Activated CD8-positive, alpha-beta memory T cell treated with anti-CD3 and anti-CD28 coated beads, Interleukin-2, amount 10 ng/mL, durations not matched to agents 7 days and 5 days (primary cell): ENCODE measurements at regions of chr1 and their contacts with region 1.

Region 1: GRCh38 chr1:9651565-9652378 is at the start of gene PIK3CD:
- DNase-seq: peak; percentile 66
- ATAC-seq: peak; percentile 59
- H3K4me3 Mint-ChIP-seq: peak within 1 kb of the TSS; percentile 97
- H3K27ac Mint-ChIP-seq: peak within 1 kb of the TSS; percentile 97
- H3K4me1 Mint-ChIP-seq: peaks cover 46% of the 10 kb centered on the region
- H3K27me3 Mint-ChIP-seq: no peaks in the 10 kb centered on the region
- total RNA-seq, gene PIK3CD: 256 to 261 TPM

Region 2: GRCh38 chr1:9665193-9665592 is 13.4 kb after region 1 on chr1:
- CTCF ChIA-PET with region 1: interaction called, 31 read pairs
- DNase-seq: no peak
- ATAC-seq: no peak
- H3K4me3 Mint-ChIP-seq: no peak overlapping the region
- H3K27ac Mint-ChIP-seq: no peak overlapping the region
- H3K4me1 Mint-ChIP-seq: peaks cover 45% of the 10 kb centered on the region
- H3K27me3 Mint-ChIP-seq: no peaks in the 10 kb centered on the region

Region 3: DNA sequence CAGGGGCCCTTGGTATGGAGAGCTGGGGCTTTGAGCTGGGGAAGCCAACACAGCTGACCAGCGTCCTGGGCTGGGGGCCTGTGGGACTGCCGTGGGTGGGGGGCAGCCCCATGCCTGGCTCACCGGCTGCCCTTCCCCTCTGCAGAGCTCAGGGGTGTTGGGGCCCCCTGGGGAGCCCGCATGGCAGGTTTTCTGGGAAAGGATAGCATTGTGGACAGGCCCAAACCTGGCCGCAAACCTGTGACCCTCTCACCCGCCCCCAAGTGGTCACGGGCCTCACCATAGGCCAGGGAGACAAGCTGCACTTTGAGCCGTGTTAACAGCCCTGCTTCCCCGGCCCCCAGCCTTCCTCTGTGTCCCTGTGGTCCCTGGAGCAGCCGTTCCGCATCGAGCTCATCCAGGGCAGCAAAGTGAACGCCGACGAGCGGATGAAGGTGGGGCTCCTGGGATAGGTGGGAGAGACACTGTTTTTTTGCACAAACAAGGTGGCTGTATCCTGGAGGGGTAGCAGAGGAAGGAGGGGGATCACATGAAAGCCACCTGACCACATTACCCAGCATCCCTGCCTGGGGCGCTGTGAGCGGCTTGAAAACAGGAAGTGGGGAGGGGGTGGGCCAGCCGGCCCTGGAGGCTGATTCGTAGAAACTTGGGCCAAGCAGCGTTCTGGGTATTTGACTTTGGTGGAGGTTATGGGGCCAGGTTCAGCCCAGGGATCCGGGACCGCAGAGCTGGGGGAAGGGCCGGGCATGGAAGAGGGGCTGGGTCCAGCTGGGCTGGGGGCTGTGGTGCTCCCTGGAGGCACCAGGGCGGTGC is 65.6 kb after region 1 on chr1:
- CTCF ChIA-PET with region 1: interaction called, 20 read pairs
- DNase-seq: peak; percentile 98
- ATAC-seq: peak; percentile 70
- H3K4me3 Mint-ChIP-seq: peak overlapping the region; percentile 87
- H3K27ac Mint-ChIP-seq: peak overlapping the region; percentile 96
- H3K4me1 Mint-ChIP-seq: peaks cover 78% of the 10 kb centered on the region
- H3K27me3 Mint-ChIP-seq: peaks cover 2% of the 10 kb centered on the region

Region 4: GRCh38 chr1:9724706-9725476 is 73.1 kb after region 1 on chr1:
- CTCF ChIA-PET with region 1: interaction called, 13 read pairs
- DNase-seq: peak; percentile 79
- ATAC-seq: peak; percentile 62
- H3K4me3 Mint-ChIP-seq: no peak overlapping the region
- H3K27ac Mint-ChIP-seq: peak overlapping the region; percentile 72
- H3K4me1 Mint-ChIP-seq: peaks cover 70% of the 10 kb centered on the region
- H3K27me3 Mint-ChIP-seq: no peaks in the 10 kb centered on the region

Region 5: GRCh38 chr1:9784508-9785133 is 132.8 kb after region 1 on chr1:
- CTCF ChIA-PET with region 1: no interaction called
- DNase-seq: peak; percentile 81
- ATAC-seq: peak; percentile 27
- H3K4me3 Mint-ChIP-seq: no peak overlapping the region
- H3K27ac Mint-ChIP-seq: peak overlapping the region; percentile 54
- H3K4me1 Mint-ChIP-seq: peaks cover 47% of the 10 kb centered on the region
- H3K27me3 Mint-ChIP-seq: no peaks in the 10 kb centered on the region